Activated T-helper 1 cell treated with anti-CD3 and anti-CD28 coated beads, Interleukin-12 subunit alpha, Interleukin-12 subunit beta, Interleukin-2, Interleukin-4 antibody, amounts not matched to agents 30 ng/mL and 10 ng/mL and 1 ng/mL, durations not matched to agents 14 hours and 24 hours and 36 hours (primary cell): ENCODE measurements at regions of chr3 and their contacts with region 1.

Region 1: GRCh38 chr3:156691920-156692319 is 17.5 kb downstream of the TIPARP start:
- DNase-seq: no peak
- H3K4me3 Mint-ChIP-seq: no peak overlapping the region
- H3K27ac Mint-ChIP-seq: no peak overlapping the region
- H3K4me1 Mint-ChIP-seq: peaks cover 69% of the 10 kb centered on the region
- H3K27me3 Mint-ChIP-seq: no peaks in the 10 kb centered on the region

Region 2: DNA sequence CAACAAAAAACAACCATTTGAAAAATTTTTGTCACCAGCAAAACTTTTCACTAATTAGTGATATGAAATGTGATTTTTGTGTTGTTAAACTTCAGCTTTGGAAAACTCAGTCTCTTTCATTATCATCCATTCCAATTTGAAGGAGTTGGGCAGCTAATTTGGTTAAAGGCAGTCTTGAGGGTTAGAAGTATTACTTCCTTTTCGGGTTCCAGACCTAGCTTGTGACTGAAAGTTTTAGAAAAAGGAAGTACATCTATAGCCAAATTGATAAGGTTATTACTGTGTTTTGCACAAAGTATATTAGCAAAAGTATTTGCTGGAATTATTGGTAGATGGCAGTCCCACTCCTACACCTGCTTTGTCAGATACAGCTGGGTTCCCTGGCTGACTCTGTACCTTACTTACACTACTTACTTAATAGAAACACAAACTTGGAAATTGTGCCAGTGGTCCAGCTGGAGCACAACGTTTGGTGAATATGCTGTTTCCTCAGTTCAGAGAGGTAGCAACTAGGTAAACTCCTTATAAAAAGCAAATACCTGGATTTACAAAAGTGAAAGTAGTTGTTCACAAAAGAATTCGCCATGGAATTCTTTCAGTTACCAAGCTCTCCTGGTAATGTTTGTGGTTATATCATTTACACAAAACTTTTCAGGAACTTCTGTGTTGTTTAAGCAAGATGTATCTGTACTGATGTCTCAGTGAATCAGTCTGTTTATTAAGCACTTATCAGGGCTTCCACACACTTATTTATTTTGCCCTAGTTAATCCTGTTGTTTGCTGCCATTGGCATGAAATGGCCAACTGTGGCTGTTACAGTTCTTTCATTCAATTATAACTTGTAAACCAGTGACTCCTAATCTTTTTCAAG is 14.1 kb after region 1 on chr3:
- intact Hi-C with region 1: loop called (anchors 2 kb)
- DNase-seq: no peak
- H3K4me3 Mint-ChIP-seq: no peak overlapping the region
- H3K27ac Mint-ChIP-seq: no peak overlapping the region
- H3K4me1 Mint-ChIP-seq: peaks cover 48% of the 10 kb centered on the region
- H3K27me3 Mint-ChIP-seq: no peaks in the 10 kb centered on the region